ENCODE measurements at regions of chr15 and their contacts with region 1.

Region 1: GRCh38 chr15:76150971-76151598 is 91.3 kb downstream of the TMEM266 start:
- ATAC-seq: peak; percentile 63 to 89 (median 82)
- H3K4me3 ChIP-seq: no peak overlapping the region
- H3K27ac ChIP-seq: no peak overlapping the region
- H3K4me1 ChIP-seq: no peaks in the 10 kb centered on the region

Region 2: GRCh38 chr15:76057332-76058000 is 93.6 kb before region 1 on chr15:
- in situ Hi-C with region 1: loop called in 1 of 9 experiments (anchors 10 kb)
- ATAC-seq: peak in 1 of 8 experiments; percentile 10
- H3K4me3 ChIP-seq: no peak overlapping the region
- H3K27ac ChIP-seq: no peak overlapping the region
- H3K4me1 ChIP-seq: peaks cover 0 to 9% of the 10 kb centered on the region in 2 donors

Measured in motor neuron (in vitro differentiated cells).